ENCODE measurements at regions of chr5 and their contacts with region 1.

Region 1: DNA sequence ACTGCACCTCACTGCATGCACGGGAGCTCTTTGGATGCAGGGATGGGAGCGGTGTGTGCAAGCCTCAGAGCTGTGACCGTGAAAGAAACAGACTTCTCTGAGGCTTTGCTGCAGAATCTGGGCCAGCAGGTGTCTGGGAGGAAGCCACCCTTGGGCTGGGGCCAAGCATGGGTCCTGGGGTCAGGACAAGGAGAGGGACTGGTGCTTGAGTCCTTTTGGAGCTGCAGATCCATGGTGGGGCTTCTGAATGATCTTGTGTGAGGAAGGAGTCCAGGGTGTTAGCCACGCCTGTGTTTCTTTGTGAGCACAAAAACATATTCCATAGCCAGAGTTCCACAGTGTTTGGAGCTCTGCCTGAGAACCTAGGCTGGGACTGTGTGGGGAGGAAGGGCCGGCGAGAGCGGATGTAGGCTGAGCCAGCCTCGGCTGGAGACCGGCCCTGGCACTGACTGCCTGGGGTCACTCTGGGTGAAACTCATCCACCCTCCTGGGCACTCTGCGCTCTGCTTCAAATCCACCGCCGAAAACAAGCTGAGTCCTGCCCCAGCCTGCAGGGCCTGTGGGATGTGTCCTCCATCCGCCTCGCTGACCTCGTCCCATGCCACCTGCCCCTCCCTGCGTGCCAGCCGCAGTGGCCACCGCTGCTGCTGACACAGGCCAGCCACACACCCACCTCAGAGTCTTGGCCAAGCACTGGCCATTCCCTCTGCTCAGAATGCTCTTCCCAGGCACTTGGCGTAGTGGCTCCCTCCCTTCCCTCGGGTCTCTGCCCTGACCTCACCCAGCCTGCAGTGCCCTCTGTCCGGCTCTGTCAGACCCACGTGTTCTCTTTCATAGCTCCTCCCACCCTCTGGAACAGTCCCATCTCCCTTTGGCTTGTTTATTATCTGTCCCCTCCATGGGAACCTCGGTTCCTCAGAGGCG is 26.7 kb downstream of the ERGIC1 start:
- DNase-seq: peak; percentile 90
- H3K4me3 ChIP-seq: no peak overlapping the region
- H3K27ac ChIP-seq: peak overlapping the region; percentile 90
- H3K4me1 ChIP-seq: peaks cover 53% of the 10 kb centered on the region
- H3K27me3 ChIP-seq: no peaks in the 10 kb centered on the region
- CTCF ChIP-seq: no peak
- POLR2A ChIP-seq: peak; percentile 53

Region 2: DNA sequence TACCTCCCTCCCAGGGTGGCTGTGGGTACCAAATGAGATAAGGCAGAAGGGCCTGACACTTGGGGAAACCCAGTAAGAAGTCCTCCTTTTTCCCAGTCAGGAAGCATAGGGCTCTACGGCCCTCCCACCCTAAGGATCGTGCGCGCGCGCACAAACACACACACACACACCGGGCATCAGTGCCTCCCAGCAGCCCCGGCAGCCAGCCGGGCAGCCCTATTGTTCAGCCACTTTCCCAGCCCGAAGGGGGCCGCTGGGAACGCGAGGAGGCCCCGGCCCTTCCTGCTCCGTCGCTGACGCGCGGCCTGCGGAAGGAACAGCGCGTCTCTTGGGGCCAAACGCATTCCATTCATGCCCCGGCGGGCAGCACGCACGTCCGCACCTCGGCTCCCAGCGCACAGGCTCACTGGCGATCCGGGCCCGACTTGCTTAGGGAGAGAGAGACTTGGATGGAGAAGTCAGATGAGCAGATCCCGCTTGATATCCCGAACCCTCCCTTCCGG is 112.4 kb before region 1 on chr5:
- CTCF ChIA-PET with region 1: no interaction called
- POLR2A ChIA-PET with region 1: interaction called, 5 read pairs
- dilution Hi-C with region 1: no loop called
- intact Hi-C with region 1: loop called (anchors 1 kb)
- DNase-seq: peak; percentile 96
- H3K4me3 ChIP-seq: no peak overlapping the region
- H3K27ac ChIP-seq: peak overlapping the region; percentile 79
- H3K4me1 ChIP-seq: peaks cover 13% of the 10 kb centered on the region
- H3K27me3 ChIP-seq: no peaks in the 10 kb centered on the region
- CTCF ChIP-seq: no peak
- POLR2A ChIP-seq: peak; percentile 52

Region 3: DNA sequence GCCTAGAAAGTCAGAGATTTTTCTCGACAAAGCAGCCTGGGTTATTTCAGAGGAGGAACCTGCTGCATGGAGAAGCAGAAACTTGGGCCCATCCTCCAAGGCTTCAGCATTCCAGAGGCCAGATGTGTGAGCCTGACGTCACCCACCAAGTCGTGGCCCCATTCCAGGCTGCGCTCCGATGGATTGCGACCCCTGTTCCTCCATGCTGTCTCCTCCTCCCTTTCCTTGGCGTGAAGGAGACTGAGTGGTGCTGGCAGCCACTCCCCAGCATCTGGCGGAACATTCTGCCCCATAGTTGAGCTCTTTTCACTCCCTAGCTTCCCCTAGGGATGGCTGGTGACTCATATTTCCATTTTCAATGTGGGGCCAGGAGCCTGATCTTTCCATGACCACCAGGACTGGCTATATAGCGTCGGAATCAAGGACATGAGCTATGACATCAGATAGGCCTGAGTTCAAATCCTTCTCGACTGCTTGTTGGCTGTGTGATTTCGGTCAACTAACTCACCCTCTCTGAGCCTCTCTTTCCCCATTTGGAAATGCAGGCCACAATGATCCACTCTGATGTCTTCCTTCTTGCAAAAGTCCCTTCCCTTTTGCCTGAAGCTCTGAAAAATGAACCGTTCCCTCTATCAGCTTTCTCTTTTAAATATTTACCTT is 65.3 kb before region 1 on chr5:
- CTCF ChIA-PET with region 1: interaction called, 4 read pairs
- POLR2A ChIA-PET with region 1: interaction called, 3 read pairs
- dilution Hi-C with region 1: no loop called
- intact Hi-C with region 1: loop called (anchors 2 kb)
- DNase-seq: peak; percentile 96
- H3K4me3 ChIP-seq: no peak overlapping the region
- H3K27ac ChIP-seq: peak overlapping the region; percentile 76
- H3K4me1 ChIP-seq: peaks cover 48% of the 10 kb centered on the region
- H3K27me3 ChIP-seq: no peaks in the 10 kb centered on the region
- CTCF ChIP-seq: no peak
- POLR2A ChIP-seq: no peak

Region 4: DNA sequence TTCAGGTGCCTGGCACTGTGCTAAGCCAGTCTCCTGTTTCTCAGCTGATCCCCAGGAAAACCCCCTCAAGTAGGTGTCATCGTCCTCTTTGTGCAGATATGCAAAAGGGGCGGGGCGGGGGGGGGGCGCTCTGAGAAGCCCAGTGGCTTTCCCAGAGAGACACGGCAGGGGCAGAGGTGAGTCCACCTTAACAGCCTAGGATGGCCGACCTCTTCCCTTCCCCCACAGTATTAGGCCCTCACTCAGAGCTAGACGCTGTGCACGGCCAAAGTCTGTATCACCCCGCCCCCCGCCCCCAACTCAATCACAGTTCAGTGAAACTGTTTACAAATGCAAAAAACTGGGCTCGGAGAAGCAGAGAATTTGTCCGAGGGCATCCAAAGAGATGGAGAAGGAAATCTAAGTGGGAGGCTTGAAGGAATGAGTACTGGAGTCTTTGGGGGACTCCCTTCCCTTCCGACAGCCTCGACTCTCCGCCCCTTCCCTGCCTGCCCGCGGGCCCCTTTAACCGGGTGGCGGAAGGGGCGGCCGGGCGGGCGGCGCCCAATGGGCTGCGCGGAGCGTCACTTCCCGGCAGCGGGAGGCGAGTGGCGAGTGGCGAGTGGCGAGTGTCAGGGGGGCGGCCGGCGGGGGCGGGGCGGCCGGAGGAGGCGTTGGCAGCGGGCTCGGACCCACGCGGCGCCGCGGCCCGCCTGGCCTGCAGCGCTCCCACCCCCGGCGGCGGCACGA is 26.9 kb before region 1 on chr5 and contains the start of gene ERGIC1:
- CTCF ChIA-PET with region 1: interaction called, 6 read pairs
- POLR2A ChIA-PET with region 1: no interaction called
- dilution Hi-C with region 1: no loop called
- intact Hi-C with region 1: loop called (anchors 1 kb)
- DNase-seq: peak; percentile 82
- H3K4me3 ChIP-seq: peak within 1 kb of the TSS; percentile 80 to 96 (median 80)
- H3K27ac ChIP-seq: peak within 1 kb of the TSS; percentile 71
- H3K4me1 ChIP-seq: peaks cover 12% of the 10 kb centered on the region
- H3K27me3 ChIP-seq: no peaks in the 10 kb centered on the region
- CTCF ChIP-seq: no peak
- POLR2A ChIP-seq: peak; percentile 72
- total RNA-seq, gene ERGIC1: 105 and 118 TPM in 2 replicates

Region 5: GRCh38 chr5:172886974-172887501 is 26.3 kb after region 1 on chr5:
- CTCF ChIA-PET with region 1: interaction called, 4 read pairs
- POLR2A ChIA-PET with region 1: interaction called, 5 read pairs
- dilution Hi-C with region 1: no loop called
- intact Hi-C with region 1: loop called (anchors 1 kb)
- DNase-seq: peak; percentile 81
- H3K4me3 ChIP-seq: no peak overlapping the region
- H3K27ac ChIP-seq: peak overlapping the region; percentile 94
- H3K4me1 ChIP-seq: peaks cover 33% of the 10 kb centered on the region
- H3K27me3 ChIP-seq: no peaks in the 10 kb centered on the region
- CTCF ChIP-seq: no peak
- POLR2A ChIP-seq: no peak

Region 6: DNA sequence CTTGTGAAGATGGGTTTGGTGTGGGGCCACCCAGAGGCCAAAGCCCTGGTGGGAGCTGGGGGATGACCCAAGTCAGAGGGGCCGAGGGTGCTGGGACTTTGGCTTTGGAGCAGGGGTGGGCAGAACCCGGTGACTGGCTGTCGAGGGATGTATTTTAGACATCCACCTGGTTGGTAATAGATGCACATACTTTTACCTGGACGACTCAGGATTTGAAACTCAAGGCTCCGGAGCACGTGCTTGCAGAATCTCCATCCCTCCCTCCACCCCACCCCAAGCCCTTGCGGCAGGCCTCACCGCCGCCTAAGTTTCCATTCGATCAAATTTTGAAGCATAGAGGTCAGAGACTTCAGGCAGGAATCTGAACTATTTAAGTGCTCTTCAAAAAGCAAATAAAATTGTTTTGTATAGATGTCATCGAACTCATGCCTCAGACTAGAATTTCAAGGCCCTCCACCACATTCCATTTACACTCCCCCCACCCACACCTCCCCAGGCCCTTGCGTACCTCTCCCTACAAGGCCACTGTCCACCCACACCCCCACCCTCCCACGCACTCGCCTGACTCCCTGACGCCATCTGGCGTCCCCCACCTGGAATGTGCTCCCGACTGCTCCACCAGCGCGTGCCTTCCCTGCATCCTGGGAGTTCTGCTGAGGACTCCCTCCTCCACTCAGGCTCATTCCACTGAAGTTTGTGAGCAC is 41.9 kb after region 1 on chr5:
- CTCF ChIA-PET with region 1: interaction called, 15 read pairs
- POLR2A ChIA-PET with region 1: no interaction called
- dilution Hi-C with region 1: no loop called
- intact Hi-C with region 1: loop called (anchors 2 kb)
- DNase-seq: peak; percentile 46
- H3K4me3 ChIP-seq: no peak overlapping the region
- H3K27ac ChIP-seq: peak overlapping the region; percentile 72
- H3K4me1 ChIP-seq: peaks cover 43% of the 10 kb centered on the region
- H3K27me3 ChIP-seq: no peaks in the 10 kb centered on the region
- CTCF ChIP-seq: peak; percentile 15 to 54
- POLR2A ChIP-seq: no peak

Region 7: DNA sequence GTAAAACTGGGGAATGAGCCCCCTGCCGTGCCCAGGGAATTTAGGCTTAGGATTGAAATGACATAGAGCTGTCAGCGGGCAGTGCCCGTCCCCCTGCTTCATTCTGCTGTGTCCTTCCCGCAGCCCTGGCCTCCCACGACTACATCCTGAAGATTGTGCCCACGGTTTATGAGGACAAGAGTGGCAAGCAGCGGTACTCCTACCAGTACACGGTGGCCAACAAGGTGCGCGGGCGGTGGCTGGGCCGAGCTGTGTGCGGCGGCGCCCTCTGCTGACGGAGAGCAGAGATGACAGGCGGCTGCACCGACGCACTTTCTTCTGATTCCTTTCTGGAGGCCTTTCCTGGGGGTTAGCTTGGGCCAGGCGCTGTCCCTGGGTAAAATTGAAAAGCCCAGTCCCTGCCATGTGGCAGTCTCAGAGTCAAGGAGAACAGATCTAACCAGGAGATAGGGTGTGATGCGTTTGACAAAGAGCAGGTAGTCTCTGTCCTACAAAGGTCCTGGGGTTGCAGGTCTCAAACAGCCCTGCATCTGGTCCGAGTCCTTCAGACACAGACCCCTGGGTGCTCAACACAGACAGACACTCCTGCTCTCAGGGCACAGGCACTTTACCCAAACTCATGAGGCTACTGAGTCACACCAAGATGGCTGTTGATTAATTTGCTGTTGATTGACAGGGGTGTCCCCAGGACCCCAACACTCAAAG is 71.7 kb after region 1 on chr5:
- CTCF ChIA-PET with region 1: interaction called, 10 read pairs
- POLR2A ChIA-PET with region 1: no interaction called
- dilution Hi-C with region 1: no loop called
- intact Hi-C with region 1: loop called (anchors 1 kb)
- DNase-seq: peak; percentile 65
- H3K4me3 ChIP-seq: no peak overlapping the region
- H3K27ac ChIP-seq: peak overlapping the region; percentile 74
- H3K4me1 ChIP-seq: peaks cover 31% of the 10 kb centered on the region
- H3K27me3 ChIP-seq: no peaks in the 10 kb centered on the region
- CTCF ChIP-seq: peak; percentile 96 to 97
- POLR2A ChIP-seq: no peak